ENCODE measurements at regions of chr4 and their contacts with region 1.

Region 1: GRCh38 chr4:19700992-19701391 is 550.7 kb upstream of the SLIT2 start:
- DNase-seq: peak; percentile 29
- ATAC-seq: no peak
- H3K4me3 ChIP-seq: no peak overlapping the region
- H3K27ac ChIP-seq: no peak overlapping the region
- H3K4me1 ChIP-seq: peaks cover 10% of the 10 kb centered on the region
- H3K27me3 ChIP-seq: no peaks in the 10 kb centered on the region
- CTCF ChIP-seq: no peak

Region 2: GRCh38 chr4:19540859-19541540 is 160.0 kb before region 1 on chr4:
- CTCF ChIA-PET with region 1: no interaction called
- POLR2A ChIA-PET with region 1: no interaction called
- intact Hi-C with region 1: loop called (anchors 10 kb)
- DNase-seq: no peak
- ATAC-seq: no peak
- H3K4me3 ChIP-seq: no peak overlapping the region
- H3K27ac ChIP-seq: no peak overlapping the region
- H3K4me1 ChIP-seq: no peaks in the 10 kb centered on the region
- H3K27me3 ChIP-seq: no peaks in the 10 kb centered on the region
- CTCF ChIP-seq: no peak

Measured in PC-3 (cell line).